ENCODE measurements at regions of chr18 and their contacts with region 1.

Region 1: GRCh38 chr18:7291046-7291445 is 60.2 kb downstream of the LRRC30 start:
- DNase-seq: no peak
- ATAC-seq: no peak
- H3K4me3 ChIP-seq: no peak overlapping the region
- H3K27ac ChIP-seq: no peak overlapping the region
- H3K4me1 ChIP-seq: no peaks in the 10 kb centered on the region
- H3K27me3 ChIP-seq: peaks cover 7% of the 10 kb centered on the region; the same call in 1 of the 2 replicates
- CTCF ChIP-seq: no peak

Region 2: GRCh38 chr18:7259475-7260081 is 31.5 kb before region 1 on chr18:
- CTCF ChIA-PET with region 1: no interaction called
- POLR2A ChIA-PET with region 1: no interaction called
- intact Hi-C with region 1: no loop called
- DNase-seq: no peak
- ATAC-seq: no peak
- H3K4me3 ChIP-seq: no peak overlapping the region
- H3K27ac ChIP-seq: no peak overlapping the region
- H3K4me1 ChIP-seq: no peaks in the 10 kb centered on the region
- H3K27me3 ChIP-seq: peaks cover 61% of the 10 kb centered on the region
- CTCF ChIP-seq: no peak

Region 3: DNA sequence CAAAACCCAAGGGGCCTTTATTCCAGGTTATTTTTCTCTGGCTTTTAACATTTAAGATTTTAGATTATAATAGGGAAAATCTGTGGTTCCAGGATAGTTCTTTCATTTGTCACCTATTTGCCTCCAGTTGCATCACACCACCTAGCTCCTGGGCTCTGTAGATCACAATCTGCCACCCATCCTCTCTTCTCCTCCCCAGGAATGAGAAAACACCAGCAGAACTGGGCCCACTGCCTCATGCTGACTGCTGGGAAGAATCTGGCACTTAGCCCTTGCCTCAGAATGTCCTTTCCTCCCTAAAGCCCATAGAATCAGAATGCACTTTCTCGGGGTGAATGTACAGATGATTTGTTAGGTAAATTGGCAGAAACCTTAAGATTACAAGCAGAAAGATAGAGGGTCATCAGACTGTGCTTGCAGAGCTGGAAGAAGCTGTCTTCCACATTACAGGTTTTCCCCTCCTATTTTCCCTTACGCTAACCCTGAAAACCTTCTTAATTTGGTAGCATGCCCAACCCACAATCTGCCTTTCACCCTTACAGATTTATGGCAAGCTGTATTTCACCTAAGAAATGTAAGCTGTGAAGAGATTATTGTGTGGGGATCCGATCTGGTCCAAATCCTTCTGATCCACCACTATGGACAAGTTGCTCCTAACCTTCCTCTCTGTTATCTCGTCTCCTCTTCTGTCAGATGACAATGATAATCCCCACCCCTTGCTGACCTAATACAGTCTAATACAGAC is 12.4 kb after region 1 on chr18:
- CTCF ChIA-PET with region 1: no interaction called
- POLR2A ChIA-PET with region 1: interaction called, 18 read pairs
- intact Hi-C with region 1: no loop called
- DNase-seq: peak; percentile 17
- ATAC-seq: no peak
- H3K4me3 ChIP-seq: no peak overlapping the region
- H3K27ac ChIP-seq: no peak overlapping the region
- H3K4me1 ChIP-seq: peaks cover 5% of the 10 kb centered on the region; the same call in 1 of the 2 replicates
- H3K27me3 ChIP-seq: no peaks in the 10 kb centered on the region
- CTCF ChIP-seq: no peak